BJ (cell line): ENCODE measurements at regions of chr1 and their contacts with region 1.

Region 1: DNA sequence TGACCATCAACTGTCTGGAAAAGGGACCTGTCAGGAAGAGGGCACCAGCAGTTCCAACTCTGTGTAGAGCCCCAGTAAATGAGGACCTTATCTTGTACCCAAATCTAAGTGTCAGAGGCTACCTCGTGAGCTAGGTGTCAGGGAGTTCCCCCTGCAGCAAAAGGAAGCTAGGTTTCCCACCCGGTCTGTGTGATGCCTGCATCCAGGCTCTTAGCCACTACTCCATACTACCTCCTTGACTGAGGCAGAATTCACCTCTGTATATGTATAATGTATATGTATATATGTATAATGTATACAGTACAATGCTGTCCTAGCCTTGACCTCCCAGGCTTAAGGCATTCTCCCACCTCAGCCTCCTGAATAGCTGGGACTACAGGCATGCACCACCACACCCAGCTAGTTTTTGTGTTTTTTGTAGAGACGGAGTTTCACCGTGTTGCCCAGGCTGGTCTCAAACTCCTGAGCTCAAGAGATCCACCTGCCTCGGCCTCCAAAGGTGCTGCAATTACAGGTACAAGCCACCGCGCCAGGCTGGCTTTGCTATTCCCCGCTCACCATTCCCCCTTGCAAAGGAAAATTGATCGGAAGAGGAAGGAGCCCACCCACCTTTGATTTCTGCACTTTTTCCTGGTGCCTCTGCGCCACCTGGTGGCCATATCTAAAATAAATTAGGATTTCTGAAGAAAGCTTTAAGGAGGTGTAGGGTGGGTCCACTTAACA is 15.7 kb upstream of the LUZP1 start:
- DNase-seq: no peak
- H3K4me3 ChIP-seq: peak overlapping the region; percentile 23; the same call in 1 of the 2 replicates
- H3K27me3 ChIP-seq: no peaks in the 10 kb centered on the region
- CTCF ChIP-seq: peak; percentile 61

Region 2: DNA sequence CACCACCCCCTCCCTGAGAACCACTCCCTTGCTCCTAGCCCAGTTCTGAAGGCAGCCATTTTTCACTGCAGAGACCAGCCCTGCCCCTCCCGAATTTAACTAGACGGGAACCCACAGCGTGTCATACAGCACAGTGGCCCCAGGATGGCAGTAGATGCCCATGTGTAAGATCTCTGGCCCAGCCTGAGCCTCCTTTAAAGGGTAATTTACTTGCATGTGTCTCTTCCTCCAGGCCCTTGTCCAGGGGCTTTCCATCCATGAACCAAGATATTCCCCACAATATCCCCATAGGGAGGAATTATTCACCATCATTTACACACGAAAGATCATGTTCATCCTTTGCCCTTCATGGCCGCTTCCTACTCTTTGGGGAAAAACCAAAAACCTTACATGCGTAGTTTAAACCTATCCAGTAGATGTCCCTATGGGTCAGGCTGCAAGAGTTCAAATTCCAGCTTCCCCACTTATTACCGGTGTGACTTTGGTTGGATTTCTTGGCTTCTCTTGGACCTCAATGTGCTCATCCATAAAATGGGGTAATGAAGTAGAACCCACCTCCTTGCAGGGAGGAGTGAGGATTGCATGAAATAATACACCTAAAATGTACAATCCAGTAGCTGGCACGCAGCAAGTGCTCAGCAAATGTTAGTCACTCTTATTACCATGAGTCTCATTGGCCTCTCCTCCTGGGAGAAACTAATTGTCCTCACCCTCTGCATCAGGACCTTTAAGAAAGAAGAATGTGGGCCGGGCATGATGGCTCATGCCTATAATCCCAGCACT is 207.7 kb before region 1 on chr1:
- CTCF ChIA-PET with region 1: interaction called, 22 read pairs
- POLR2A ChIA-PET with region 1: no interaction called
- DNase-seq: peak; percentile 26
- H3K4me3 ChIP-seq: no peak overlapping the region
- H3K27me3 ChIP-seq: peaks cover 10% of the 10 kb centered on the region
- CTCF ChIP-seq: peak; percentile 81

Region 3: GRCh38 chr1:23083714-23084480 is 100.5 kb before region 1 on chr1:
- CTCF ChIA-PET with region 1: interaction called, 412 read pairs
- POLR2A ChIA-PET with region 1: no interaction called
- DNase-seq: no peak
- H3K4me3 ChIP-seq: no peak overlapping the region
- H3K27me3 ChIP-seq: no peaks in the 10 kb centered on the region
- CTCF ChIP-seq: no peak

Region 4: GRCh38 chr1:23122023-23122748 is 62.2 kb before region 1 on chr1:
- CTCF ChIA-PET with region 1: interaction called, 12 read pairs
- POLR2A ChIA-PET with region 1: no interaction called
- DNase-seq: no peak
- H3K4me3 ChIP-seq: no peak overlapping the region
- H3K27me3 ChIP-seq: no peaks in the 10 kb centered on the region
- CTCF ChIP-seq: no peak

Region 5: GRCh38 chr1:23168457-23169194 is 15.7 kb before region 1 on chr1 and contains the start of gene LUZP1:
- CTCF ChIA-PET with region 1: interaction called, 25 read pairs
- POLR2A ChIA-PET with region 1: no interaction called
- DNase-seq: no peak
- H3K4me3 ChIP-seq: peak within 1 kb of the TSS; percentile 81
- H3K27me3 ChIP-seq: no peaks in the 10 kb centered on the region
- CTCF ChIP-seq: no peak
- polyA plus RNA-seq, gene LUZP1: 22.0 and 24.5 TPM in 2 replicates

Region 6: GRCh38 chr1:23196639-23197328 is 12.4 kb after region 1 on chr1:
- CTCF ChIA-PET with region 1: interaction called, 37 read pairs
- POLR2A ChIA-PET with region 1: no interaction called
- DNase-seq: peak; percentile 80
- H3K4me3 ChIP-seq: no peak overlapping the region
- H3K27me3 ChIP-seq: no peaks in the 10 kb centered on the region
- CTCF ChIP-seq: no peak

Region 7: DNA sequence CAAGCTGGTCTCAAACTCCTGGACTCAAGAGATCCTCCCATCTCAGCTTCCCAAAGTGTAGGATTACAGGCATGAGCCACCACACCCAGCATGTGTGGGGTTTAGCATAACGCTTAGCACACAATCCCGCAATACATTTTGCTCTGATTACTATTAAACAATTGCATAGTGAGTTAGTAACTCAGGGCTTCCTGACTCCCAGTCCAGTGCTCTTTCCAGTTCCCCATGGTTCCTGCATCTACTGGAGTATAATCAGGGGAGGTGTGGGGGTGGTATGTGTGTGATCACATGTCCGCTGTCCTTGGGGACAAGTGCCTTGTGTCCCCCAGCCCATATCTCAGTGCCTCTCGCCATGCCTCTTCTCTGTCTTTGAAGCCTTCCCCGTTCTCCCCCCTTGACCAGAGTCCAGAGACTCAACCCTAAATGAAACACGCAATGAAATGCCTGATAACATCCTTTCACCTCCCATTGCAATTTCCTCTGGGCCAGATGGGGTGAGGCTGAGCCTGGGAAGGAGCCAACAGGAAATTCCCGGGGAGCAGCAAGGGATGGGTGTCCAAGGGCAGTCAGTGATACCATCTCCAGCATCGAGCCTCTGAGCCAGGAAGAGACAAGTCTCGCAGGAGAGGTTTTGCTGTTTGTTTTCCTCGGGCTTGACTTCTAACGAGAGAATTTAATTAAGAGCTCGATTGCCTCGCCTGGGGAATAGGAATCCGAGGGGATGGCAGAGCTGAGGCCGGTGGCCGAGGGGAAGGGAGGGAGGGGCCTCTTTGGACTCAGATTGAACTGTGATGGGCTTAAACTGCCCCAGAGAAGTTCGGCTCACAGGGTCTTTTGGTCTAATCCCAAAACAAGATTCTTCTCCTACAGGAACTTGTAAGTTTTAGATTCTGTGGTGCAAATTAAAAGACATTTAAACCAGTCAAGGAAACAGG is 40.6 kb after region 1 on chr1:
- CTCF ChIA-PET with region 1: no interaction called
- POLR2A ChIA-PET with region 1: no interaction called
- DNase-seq: peak; percentile 28
- H3K4me3 ChIP-seq: no peak overlapping the region
- H3K27me3 ChIP-seq: peaks cover 3% of the 10 kb centered on the region
- CTCF ChIP-seq: no peak

Region 8: GRCh38 chr1:23664837-23665795 is 480.7 kb after region 1 on chr1:
- CTCF ChIA-PET with region 1: no interaction called
- POLR2A ChIA-PET with region 1: no interaction called
- DNase-seq: no peak
- H3K4me3 ChIP-seq: no peak overlapping the region
- H3K27me3 ChIP-seq: no peaks in the 10 kb centered on the region
- CTCF ChIP-seq: peak; percentile 47